ENCODE measurements at regions of chr13 and their contacts with region 1.

Region 1: GRCh38 chr13:71864094-71864985 is 2.7 kb downstream of the DACH1 start:
- DNase-seq: peak; percentile 56
- H3K4me3 ChIP-seq: peak overlapping the region; percentile 78
- H3K27ac ChIP-seq: peak overlapping the region; percentile 85
- H3K4me1 ChIP-seq: peaks cover 44% of the 10 kb centered on the region
- H3K27me3 ChIP-seq: peaks cover 42% of the 10 kb centered on the region
- CTCF ChIP-seq: no peak

Region 2: GRCh38 chr13:71252184-71252704 is 612.1 kb before region 1 on chr13:
- intact Hi-C with region 1: loop called (anchors 5 kb)
- DNase-seq: no peak
- H3K4me3 ChIP-seq: no peak overlapping the region
- H3K27ac ChIP-seq: peak overlapping the region; percentile 71
- H3K4me1 ChIP-seq: peaks cover 14% of the 10 kb centered on the region
- H3K27me3 ChIP-seq: no peaks in the 10 kb centered on the region
- CTCF ChIP-seq: no peak

Region 3: GRCh38 chr13:71722206-71722605 is 142.1 kb before region 1 on chr13:
- intact Hi-C with region 1: no loop called
- DNase-seq: no peak
- H3K4me3 ChIP-seq: no peak overlapping the region
- H3K27ac ChIP-seq: no peak overlapping the region
- H3K4me1 ChIP-seq: no peaks in the 10 kb centered on the region
- H3K27me3 ChIP-seq: no peaks in the 10 kb centered on the region
- CTCF ChIP-seq: no peak

Measured in left ventricle myocardium inferior (tissue), 1 donor.